HepG2 (cell line): ENCODE measurements at regions of chr2 and their contacts with region 1.

Region 1: DNA sequence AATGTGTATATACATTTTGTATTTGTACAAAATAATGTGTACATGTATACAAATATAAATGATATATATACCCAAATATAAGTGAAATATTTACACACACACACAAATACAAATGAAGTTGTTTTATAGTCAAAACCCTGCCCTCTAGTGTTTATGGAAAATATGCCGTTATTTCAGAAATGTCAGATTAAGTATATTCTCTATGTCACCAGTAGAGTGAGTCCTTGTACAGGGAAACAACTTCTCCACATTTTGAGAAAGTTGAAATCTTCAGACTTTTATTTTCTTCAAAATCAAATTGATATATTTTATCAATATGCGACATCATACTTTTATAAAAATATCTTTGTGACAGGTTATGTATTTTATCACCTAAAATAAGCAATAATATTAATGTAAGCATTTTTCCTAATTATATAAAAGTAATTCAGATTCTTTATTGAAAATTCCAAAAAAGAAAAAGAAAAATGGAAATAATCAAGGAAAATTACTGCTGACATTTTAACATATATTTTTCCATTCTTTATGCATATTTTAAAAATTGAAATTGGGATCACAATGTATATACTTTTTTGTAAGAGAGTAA is 22.4 kb downstream of the ARL6IP6 start:
- DNase-seq: peak; percentile 71
- ATAC-seq: peak; percentile 70
- H3K4me3 ChIP-seq: no peak overlapping the region
- H3K27ac ChIP-seq: no peak overlapping the region
- H3K4me1 ChIP-seq: no peaks in the 10 kb centered on the region
- H3K27me3 ChIP-seq: no peaks in the 10 kb centered on the region
- CTCF ChIP-seq: peak; percentile 72
- EP300 ChIP-seq: no peak
- POLR2A ChIP-seq: no peak
- RAD21 ChIP-seq: peak; percentile 59; the same call in 1 of the 2 replicates

Region 2: GRCh38 chr2:152036611-152037469 is 704.0 kb before region 1 on chr2:
- CTCF ChIA-PET with region 1: interaction called, 5 read pairs
- POLR2A ChIA-PET with region 1: no interaction called
- in situ Hi-C with region 1: no loop called
- intact Hi-C with region 1: loop called (anchors 2 kb)
- DNase-seq: peak; percentile 73
- ATAC-seq: peak; percentile 83
- H3K4me3 ChIP-seq: no peak overlapping the region
- H3K27ac ChIP-seq: no peak overlapping the region
- H3K4me1 ChIP-seq: no peaks in the 10 kb centered on the region
- H3K27me3 ChIP-seq: peaks cover 2 to 30% of the 10 kb centered on the region in 2 experiments; a peak in 2 of 5 replicates
- CTCF ChIP-seq: peak; percentile 93
- EP300 ChIP-seq: no peak
- POLR2A ChIP-seq: no peak
- RAD21 ChIP-seq: peak; percentile 77

Region 3: GRCh38 chr2:152175458-152176325 is 565.1 kb before region 1 on chr2 and contains the start of gene STAM2:
- CTCF ChIA-PET with region 1: interaction called, 3 read pairs
- POLR2A ChIA-PET with region 1: no interaction called
- in situ Hi-C with region 1: no loop called
- intact Hi-C with region 1: loop called (anchors 5 kb)
- DNase-seq: peak; percentile 89
- ATAC-seq: peak; percentile 92
- H3K4me3 ChIP-seq: peak within 1 kb of the TSS; percentile 90 to 99 (median 91)
- H3K27ac ChIP-seq: peak within 1 kb of the TSS; percentile 94
- H3K4me1 ChIP-seq: peaks cover 30% of the 10 kb centered on the region
- H3K27me3 ChIP-seq: no peaks in the 10 kb centered on the region; a peak in 1 of 5 replicates
- CTCF ChIP-seq: peak; percentile 99
- EP300 ChIP-seq: peak; percentile 3 to 38; a peak in 1 of 4 replicates
- POLR2A ChIP-seq: peak; percentile 93 to 96
- RAD21 ChIP-seq: peak; percentile 98
- total RNA-seq, gene STAM2: 24.1 and 29.2 TPM in 2 replicates

Region 4: GRCh38 chr2:152200562-152201465 is 540.0 kb before region 1 on chr2:
- CTCF ChIA-PET with region 1: no interaction called
- POLR2A ChIA-PET with region 1: no interaction called
- in situ Hi-C with region 1: no loop called
- intact Hi-C with region 1: no loop called
- DNase-seq: peak; percentile 77
- ATAC-seq: peak; percentile 98
- H3K4me3 ChIP-seq: peak overlapping the region in 1 of 3 experiments; percentile 14; a peak in 1 of 6 replicates
- H3K27ac ChIP-seq: no peak overlapping the region
- H3K4me1 ChIP-seq: peaks cover 14% of the 10 kb centered on the region
- H3K27me3 ChIP-seq: 0 out of 5 replicates have a peak, but pooled peaks cover 0 to 6% of the 10 kb centered on the region in 2 experiments
- CTCF ChIP-seq: no peak
- EP300 ChIP-seq: no peak; a peak in 1 of 4 replicates
- POLR2A ChIP-seq: no peak
- RAD21 ChIP-seq: no peak

Region 5: DNA sequence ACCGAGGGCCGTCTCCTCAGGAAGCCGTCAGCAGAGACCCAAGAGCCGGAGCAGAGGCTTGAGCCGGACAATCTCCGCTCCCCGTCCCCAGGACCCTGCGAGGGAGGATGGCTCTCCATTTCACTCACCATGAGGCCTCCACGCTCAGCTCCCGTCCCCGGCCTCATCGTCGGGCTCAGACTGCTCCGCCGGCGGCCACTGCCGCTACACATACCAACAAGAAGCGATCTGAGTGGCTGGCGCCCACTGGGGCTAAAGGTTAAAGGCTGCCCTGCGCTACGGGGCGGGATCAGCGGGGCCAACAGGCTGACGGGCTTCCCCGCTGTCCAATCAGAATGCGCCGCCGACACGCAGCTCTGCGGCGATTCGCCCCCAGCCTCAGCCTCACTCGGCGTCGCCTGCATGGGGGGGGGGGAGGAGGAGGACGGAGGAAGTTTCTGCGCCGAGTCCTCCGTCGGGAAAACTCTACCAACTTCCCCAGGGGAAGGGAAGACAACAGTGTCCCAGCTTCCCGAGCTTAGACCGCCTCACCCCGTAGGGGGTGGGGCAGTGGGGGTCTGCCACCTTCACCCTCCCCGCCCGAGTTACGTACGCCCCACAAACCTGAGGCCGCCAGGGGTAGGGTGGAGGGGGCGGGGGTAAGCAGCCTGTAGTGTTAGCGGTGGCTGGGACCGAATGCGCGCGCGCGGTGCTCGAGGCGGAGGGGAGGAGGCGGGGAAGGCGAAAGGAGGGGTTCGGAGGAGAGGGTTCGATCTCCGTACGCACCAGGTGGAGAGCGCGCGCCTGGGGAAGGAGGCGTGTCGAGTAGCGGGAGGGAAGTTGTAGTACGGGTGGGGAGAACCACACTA is 23.4 kb before region 1 on chr2 and contains the start of gene PRPF40A:
- CTCF ChIA-PET with region 1: interaction called, 3 read pairs
- POLR2A ChIA-PET with region 1: interaction called, 4 read pairs
- in situ Hi-C with region 1: no loop called
- intact Hi-C with region 1: loop called (anchors 1 kb)
- DNase-seq: peak; percentile 97
- ATAC-seq: peak; percentile 82
- H3K4me3 ChIP-seq: peak within 1 kb of the TSS; percentile 75 to 96 (median 82)
- H3K27ac ChIP-seq: peak within 1 kb of the TSS; percentile 97
- H3K4me1 ChIP-seq: peaks cover 62% of the 10 kb centered on the region
- H3K27me3 ChIP-seq: no peaks in the 10 kb centered on the region; a peak in 1 of 5 replicates
- CTCF ChIP-seq: no peak
- EP300 ChIP-seq: 0 out of 4 replicates have a peak, but pooled peaks of 1 of the 2 experiments have one; percentile 17
- POLR2A ChIP-seq: peak; percentile 83 to 93
- RAD21 ChIP-seq: 0 out of 2 replicates have a peak, but pooled peaks have one; percentile 19
- total RNA-seq, gene PRPF40A: 207 and 298 TPM in 2 replicates

Region 6: GRCh38 chr2:153287110-153287801 is 546.4 kb after region 1 on chr2:
- CTCF ChIA-PET with region 1: no interaction called
- POLR2A ChIA-PET with region 1: no interaction called
- in situ Hi-C with region 1: no loop called
- intact Hi-C with region 1: loop called (anchors 5 kb)
- DNase-seq: peak; percentile 48
- ATAC-seq: peak; percentile 99
- H3K4me3 ChIP-seq: peak overlapping the region in 1 of 3 experiments; percentile 57; a peak in 1 of 6 replicates
- H3K27ac ChIP-seq: no peak overlapping the region
- H3K4me1 ChIP-seq: peaks cover 7% of the 10 kb centered on the region
- H3K27me3 ChIP-seq: no peaks in the 10 kb centered on the region
- CTCF ChIP-seq: peak; percentile 78
- EP300 ChIP-seq: no peak
- POLR2A ChIP-seq: no peak
- RAD21 ChIP-seq: peak; percentile 19; the same call in 1 of the 2 replicates

Region 7: GRCh38 chr2:153478334-153479261 is 737.8 kb after region 1 on chr2 and contains the start of gene RPRM:
- CTCF ChIA-PET with region 1: interaction called, 4 read pairs
- POLR2A ChIA-PET with region 1: no interaction called
- in situ Hi-C with region 1: loop called (anchors 25 kb)
- intact Hi-C with region 1: no loop called
- DNase-seq: peak; percentile 35
- ATAC-seq: peak; percentile 98
- H3K4me3 ChIP-seq: peak within 1 kb of the TSS; percentile 19 to 63 (median 39); a peak in 4 of 6 replicates
- H3K27ac ChIP-seq: no peak within 1 kb of the TSS
- H3K4me1 ChIP-seq: peaks cover 16% of the 10 kb centered on the region
- H3K27me3 ChIP-seq: peaks cover 6 to 43% of the 10 kb centered on the region in 2 experiments; a peak in 4 of 5 replicates
- CTCF ChIP-seq: peak; percentile 85
- EP300 ChIP-seq: no peak
- POLR2A ChIP-seq: no peak
- RAD21 ChIP-seq: peak; percentile 94
- total RNA-seq, gene RPRM: not detected in 2 replicates

Region 8: DNA sequence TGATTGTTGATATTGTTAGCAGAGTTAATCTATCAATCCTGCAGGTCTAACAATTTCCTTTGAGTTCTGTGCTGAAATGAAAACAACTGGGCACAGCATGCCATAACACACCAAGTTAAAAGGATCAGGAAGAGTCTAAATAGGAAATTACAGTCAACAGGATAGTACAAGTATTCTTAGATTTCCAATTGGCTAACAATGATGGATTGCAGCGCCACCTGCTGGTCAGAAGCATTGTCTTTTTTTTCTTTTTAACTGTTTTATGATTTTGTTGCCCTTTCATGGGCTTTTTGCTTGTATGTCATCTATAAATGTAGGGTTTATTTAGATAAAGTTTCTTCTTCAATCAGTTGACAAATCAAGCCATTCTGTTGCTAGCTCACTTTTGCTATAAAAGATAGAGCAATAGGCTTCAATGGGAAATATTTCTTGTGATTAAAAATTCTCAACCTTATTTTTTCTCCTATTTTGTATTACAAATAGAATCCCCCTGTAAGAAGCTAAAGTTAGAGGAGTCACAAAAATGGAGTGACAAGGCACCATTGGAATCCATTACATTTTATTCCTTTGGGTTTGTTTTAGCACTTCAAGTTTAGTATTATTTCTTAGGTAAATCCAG is 778.5 kb after region 1 on chr2:
- CTCF ChIA-PET with region 1: interaction called, 7 read pairs
- POLR2A ChIA-PET with region 1: no interaction called
- in situ Hi-C with region 1: no loop called
- intact Hi-C with region 1: loop called (anchors 5 kb)
- DNase-seq: peak; percentile 50
- ATAC-seq: peak; percentile 45; the same call in 2 of the 3 replicates
- H3K4me3 ChIP-seq: no peak overlapping the region
- H3K27ac ChIP-seq: no peak overlapping the region
- H3K4me1 ChIP-seq: no peaks in the 10 kb centered on the region
- H3K27me3 ChIP-seq: no peaks in the 10 kb centered on the region; a peak in 1 of 5 replicates
- CTCF ChIP-seq: peak; percentile 79
- EP300 ChIP-seq: no peak
- POLR2A ChIP-seq: no peak
- RAD21 ChIP-seq: no peak